IMR-90 (cell line): ENCODE measurements at regions of chr6 and their contacts with region 1.

Region 1: GRCh38 chr6:27772261-27773001 is 139.8 kb downstream of the OR2B2 start:
- DNase-seq: peak; percentile 77
- ATAC-seq: peak; percentile 100
- H3K4me3 ChIP-seq: no peak overlapping the region
- H3K27ac ChIP-seq: no peak overlapping the region
- H3K4me1 ChIP-seq: no peaks in the 10 kb centered on the region
- H3K27me3 ChIP-seq: peaks cover 4% of the 10 kb centered on the region; the same call in 1 of the 2 replicates
- CTCF ChIP-seq: peak; percentile 91
- POLR2A ChIP-seq: no peak
- RAD21 ChIP-seq: peak; percentile 72

Region 2: GRCh38 chr6:27786048-27786447 is 13.6 kb after region 1 on chr6:
- CTCF ChIA-PET with region 1: interaction called, 11 read pairs
- POLR2A ChIA-PET with region 1: no interaction called
- dilution Hi-C with region 1: no loop called
- in situ Hi-C with region 1: no loop called
- intact Hi-C with region 1: no loop called
- DNase-seq: no peak
- ATAC-seq: no peak
- H3K4me3 ChIP-seq: no peak overlapping the region
- H3K27ac ChIP-seq: no peak overlapping the region
- H3K4me1 ChIP-seq: no peaks in the 10 kb centered on the region
- H3K27me3 ChIP-seq: peaks cover 5% of the 10 kb centered on the region
- CTCF ChIP-seq: no peak
- POLR2A ChIP-seq: no peak
- RAD21 ChIP-seq: no peak

Region 3: DNA sequence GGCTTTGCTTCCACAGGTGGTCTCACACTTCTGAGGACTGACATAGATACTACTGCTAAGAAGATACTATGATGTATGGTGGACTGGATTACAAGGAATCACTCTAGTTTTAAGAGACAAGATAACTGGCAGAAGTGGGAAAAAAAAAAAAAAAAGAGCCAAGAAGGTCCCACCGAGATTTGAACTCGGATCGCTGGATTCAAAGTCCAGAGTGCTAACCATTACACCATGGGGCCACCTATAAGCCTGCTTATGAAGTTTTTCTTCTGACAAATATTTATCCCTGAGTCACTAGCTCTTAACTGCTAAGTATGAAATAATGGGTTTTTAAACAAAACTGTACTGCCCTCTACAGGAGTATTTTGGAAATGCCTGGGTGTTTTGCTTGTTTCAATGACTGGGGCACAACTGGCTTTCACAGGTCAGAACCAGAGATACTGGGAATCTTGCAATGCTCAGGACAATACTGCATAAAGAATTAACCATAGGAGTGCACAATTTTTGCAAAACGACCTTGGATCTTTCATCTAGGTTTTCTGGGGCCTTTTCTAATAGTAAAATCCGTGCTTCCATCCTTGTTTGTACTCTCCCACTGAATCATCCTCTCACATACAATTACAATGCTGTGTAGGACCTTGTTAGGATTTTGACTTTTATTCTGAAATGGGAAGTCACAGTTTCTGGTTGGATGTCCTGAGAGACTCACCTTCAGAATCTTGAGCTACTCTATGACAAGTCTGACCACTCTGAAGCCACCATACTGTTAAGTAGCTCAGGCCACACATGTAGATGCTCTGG is 23.5 kb after region 1 on chr6:
- CTCF ChIA-PET with region 1: interaction called, 16 read pairs
- POLR2A ChIA-PET with region 1: no interaction called
- dilution Hi-C with region 1: no loop called
- in situ Hi-C with region 1: no loop called
- intact Hi-C with region 1: no loop called
- DNase-seq: peak; percentile 89
- ATAC-seq: peak; percentile 63
- H3K4me3 ChIP-seq: no peak overlapping the region
- H3K27ac ChIP-seq: no peak overlapping the region
- H3K4me1 ChIP-seq: no peaks in the 10 kb centered on the region
- H3K27me3 ChIP-seq: no peaks in the 10 kb centered on the region
- CTCF ChIP-seq: peak; percentile 84
- POLR2A ChIP-seq: no peak
- RAD21 ChIP-seq: peak; percentile 55